GM12878 (cell line): ENCODE measurements at regions of chr5 and their contacts with region 1.

Region 1: DNA sequence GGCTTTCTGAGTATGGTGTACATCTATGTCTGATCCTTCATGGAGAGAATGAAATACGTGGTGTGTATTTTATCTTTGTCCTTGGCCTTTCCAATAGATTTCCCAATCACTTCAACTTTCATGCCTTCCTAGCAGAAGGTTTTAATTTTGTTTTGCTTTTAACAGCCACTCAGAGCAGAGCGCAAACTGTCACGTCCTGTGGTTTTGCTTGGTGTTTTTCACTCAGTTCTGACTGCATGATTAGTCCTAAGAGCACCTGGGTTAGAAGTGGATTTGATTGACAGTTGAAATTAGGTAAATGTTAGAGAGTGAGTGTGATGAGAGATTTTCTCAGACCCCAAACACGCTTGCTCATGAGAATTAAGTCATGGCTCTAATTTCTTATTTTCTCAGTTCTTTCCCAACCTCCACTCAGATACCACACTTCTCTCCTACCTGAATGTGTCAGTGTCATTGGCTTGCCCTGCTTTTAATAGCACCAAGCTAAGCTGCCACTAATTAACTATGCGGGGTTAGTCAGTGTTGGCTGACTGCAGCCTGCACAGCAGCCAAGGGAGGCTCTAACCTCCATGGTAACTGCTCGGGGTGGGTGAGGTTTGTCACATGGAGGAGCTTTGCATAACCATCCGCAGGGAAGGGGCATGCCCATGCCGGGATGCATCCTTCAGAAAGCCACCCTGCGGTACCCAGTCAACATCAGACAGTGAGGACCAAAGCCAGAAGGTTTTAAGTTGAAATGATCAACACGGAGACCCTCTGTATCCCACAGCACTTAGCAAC is 173.4 kb downstream of the NR3C1 start:
- DNase-seq: peak; percentile 99
- ATAC-seq: peak; percentile 89
- H3K4me3 ChIP-seq: peak overlapping the region; percentile 34; the same call in 1 of the 2 replicates
- H3K27ac ChIP-seq: peak overlapping the region; percentile 90
- H3K4me1 ChIP-seq: peaks cover 29% of the 10 kb centered on the region
- H3K27me3 ChIP-seq: no peaks in the 10 kb centered on the region
- CTCF ChIP-seq: no peak
- EP300 ChIP-seq: peak; percentile 74 to 88; a peak in 2 of 4 replicates
- POLR2A ChIP-seq: peak; percentile 56; the same call in 1 of the 2 replicates
- RAD21 ChIP-seq: peak; percentile 50; the same call in 1 of the 2 replicates

Region 2: DNA sequence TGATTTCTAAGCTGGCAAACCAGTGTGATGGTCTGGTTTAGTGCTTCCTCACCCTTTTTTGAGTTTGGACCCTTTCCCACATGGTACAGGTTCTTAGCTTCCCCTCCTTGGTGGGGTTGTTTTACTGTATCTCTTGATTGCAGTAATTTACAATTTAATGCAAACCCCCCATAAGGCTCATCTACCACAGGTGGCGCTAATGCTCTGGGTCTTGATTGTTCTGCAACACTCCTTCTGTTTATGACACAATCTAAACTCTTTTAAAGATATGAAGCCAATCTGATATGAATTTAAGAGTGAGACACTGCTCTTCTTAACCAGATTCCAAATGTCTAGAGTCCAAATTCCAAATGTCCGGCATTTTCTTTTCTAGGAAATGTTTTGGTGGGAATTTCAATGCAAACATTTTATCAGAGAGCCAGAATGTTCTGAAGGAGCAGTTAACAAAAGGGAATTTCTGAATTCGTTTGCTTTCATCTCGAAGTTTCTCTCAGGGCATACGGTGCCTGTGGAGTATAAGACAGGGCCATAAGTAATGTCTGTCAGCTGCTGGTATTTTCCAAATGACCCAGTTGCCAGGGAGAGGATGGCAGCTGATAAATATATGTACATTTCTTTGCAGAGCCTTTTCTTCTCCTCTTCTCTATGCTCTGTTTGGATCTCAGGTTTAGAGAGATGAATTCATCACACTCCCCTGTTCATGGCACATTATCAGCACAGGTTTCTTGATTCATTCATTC is 213.1 kb before region 1 on chr5:
- CTCF ChIA-PET with region 1: interaction called, 20 read pairs
- POLR2A ChIA-PET with region 1: interaction called, 7 read pairs
- RAD21 ChIA-PET with region 1: interaction called, 53 read pairs
- SMC1A ChIA-PET with region 1: interaction called, 21 read pairs
- in situ Hi-C with region 1: no loop called
- intact Hi-C with region 1: loop called (anchors 1 kb)
- DNase-seq: no peak
- ATAC-seq: peak; percentile 28
- H3K4me3 ChIP-seq: no peak overlapping the region
- H3K27ac ChIP-seq: no peak overlapping the region
- H3K4me1 ChIP-seq: peaks cover 32% of the 10 kb centered on the region
- H3K27me3 ChIP-seq: no peaks in the 10 kb centered on the region
- CTCF ChIP-seq: peak; percentile 68 to 75 (median 72)
- EP300 ChIP-seq: peak in 1 of 2 experiments; percentile 8; a peak in 1 of 4 replicates
- POLR2A ChIP-seq: no peak
- RAD21 ChIP-seq: peak; percentile 88

Region 3: DNA sequence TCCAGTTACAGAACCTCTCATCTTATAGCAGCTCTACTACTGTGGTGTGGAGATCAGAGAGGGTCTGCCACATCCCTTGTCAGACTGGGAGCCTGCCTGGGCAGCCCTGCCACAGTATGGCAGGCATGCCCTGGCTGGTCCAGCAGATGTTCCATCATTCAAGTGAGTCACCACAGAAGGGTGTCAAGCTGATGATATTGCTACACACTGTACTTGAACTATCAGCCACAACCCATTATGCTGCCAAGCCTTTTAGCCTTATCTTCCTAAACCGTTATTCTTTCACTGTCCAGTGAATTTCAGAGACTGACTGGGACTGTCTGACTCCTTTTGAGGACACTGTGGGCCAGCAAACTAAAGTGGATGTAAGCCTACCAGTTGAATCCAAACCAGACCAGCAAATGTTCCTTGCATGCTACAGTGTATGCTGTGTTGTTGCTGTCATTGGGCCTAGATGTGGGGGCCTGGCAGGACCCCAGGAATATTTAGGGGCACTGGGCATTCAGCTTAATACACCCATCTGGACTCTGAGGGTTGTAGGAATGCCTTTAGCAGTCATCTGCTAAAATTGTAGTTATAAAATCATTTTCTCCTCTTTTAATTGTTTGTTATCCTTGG is 29.2 kb before region 1 on chr5:
- CTCF ChIA-PET with region 1: interaction called, 75 read pairs
- POLR2A ChIA-PET with region 1: interaction called, 114 read pairs
- RAD21 ChIA-PET with region 1: interaction called, 482 read pairs
- SMC1A ChIA-PET with region 1: interaction called, 423 read pairs
- in situ Hi-C with region 1: no loop called
- intact Hi-C with region 1: loop called (anchors 1 kb)
- DNase-seq: no peak
- ATAC-seq: peak; percentile 69
- H3K4me3 ChIP-seq: no peak overlapping the region
- H3K27ac ChIP-seq: peak overlapping the region; percentile 14; the same call in 1 of the 2 replicates
- H3K4me1 ChIP-seq: peaks cover 17% of the 10 kb centered on the region
- H3K27me3 ChIP-seq: no peaks in the 10 kb centered on the region
- CTCF ChIP-seq: no peak
- EP300 ChIP-seq: no peak
- POLR2A ChIP-seq: no peak
- RAD21 ChIP-seq: no peak

Region 4: GRCh38 chr5:143271431-143271830 is 41.3 kb after region 1 on chr5:
- CTCF ChIA-PET with region 1: no interaction called
- POLR2A ChIA-PET with region 1: interaction called, 4 read pairs
- RAD21 ChIA-PET with region 1: interaction called, 12 read pairs
- SMC1A ChIA-PET with region 1: interaction called, 4 read pairs
- in situ Hi-C with region 1: no loop called
- intact Hi-C with region 1: loop called (anchors 5 kb)
- DNase-seq: no peak
- ATAC-seq: peak; percentile 69
- H3K4me3 ChIP-seq: no peak overlapping the region
- H3K27ac ChIP-seq: no peak overlapping the region
- H3K4me1 ChIP-seq: no peaks in the 10 kb centered on the region
- H3K27me3 ChIP-seq: no peaks in the 10 kb centered on the region
- CTCF ChIP-seq: no peak
- EP300 ChIP-seq: no peak
- POLR2A ChIP-seq: no peak
- RAD21 ChIP-seq: no peak

Region 5: GRCh38 chr5:143386725-143387124 is 156.6 kb after region 1 on chr5:
- CTCF ChIA-PET with region 1: no interaction called
- POLR2A ChIA-PET with region 1: no interaction called
- RAD21 ChIA-PET with region 1: interaction called, 5 read pairs
- SMC1A ChIA-PET with region 1: interaction called, 16 read pairs
- in situ Hi-C with region 1: no loop called
- intact Hi-C with region 1: no loop called
- DNase-seq: no peak
- ATAC-seq: no peak
- H3K4me3 ChIP-seq: no peak overlapping the region
- H3K27ac ChIP-seq: no peak overlapping the region
- H3K4me1 ChIP-seq: no peaks in the 10 kb centered on the region
- H3K27me3 ChIP-seq: no peaks in the 10 kb centered on the region
- CTCF ChIP-seq: no peak
- EP300 ChIP-seq: no peak
- POLR2A ChIP-seq: no peak
- RAD21 ChIP-seq: no peak

Region 6: DNA sequence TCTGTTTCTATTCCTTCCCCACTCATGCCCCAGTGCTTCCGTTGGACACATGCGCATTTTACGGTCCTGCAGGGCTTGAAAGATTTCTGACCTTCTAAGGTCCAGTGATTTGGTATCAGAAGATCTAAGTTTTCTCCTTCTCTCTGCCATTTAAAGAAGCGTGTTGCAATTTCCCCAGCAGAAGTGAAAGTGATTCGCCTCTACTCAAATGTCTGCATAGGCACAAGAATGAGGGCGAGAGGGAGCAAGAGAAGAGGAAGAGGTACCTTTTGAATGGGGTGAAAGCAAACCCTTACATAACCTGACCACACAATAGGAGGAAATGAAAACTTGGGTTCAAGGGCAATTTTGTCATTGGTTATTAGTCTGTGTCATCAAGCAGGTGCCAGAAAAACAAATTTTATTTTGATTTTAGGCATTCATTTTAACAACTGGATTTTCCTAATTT is 205.1 kb after region 1 on chr5:
- CTCF ChIA-PET with region 1: interaction called, 3 read pairs
- POLR2A ChIA-PET with region 1: interaction called, 3 read pairs
- RAD21 ChIA-PET with region 1: interaction called, 3 read pairs
- SMC1A ChIA-PET with region 1: interaction called, 11 read pairs
- in situ Hi-C with region 1: no loop called
- intact Hi-C with region 1: no loop called
- DNase-seq: peak; percentile 98
- ATAC-seq: peak; percentile 81
- H3K4me3 ChIP-seq: peak overlapping the region; percentile 49; the same call in 1 of the 2 replicates
- H3K27ac ChIP-seq: peak overlapping the region; percentile 89
- H3K4me1 ChIP-seq: peaks cover 16% of the 10 kb centered on the region
- H3K27me3 ChIP-seq: no peaks in the 10 kb centered on the region
- CTCF ChIP-seq: no peak
- EP300 ChIP-seq: peak; percentile 88 to 96
- POLR2A ChIP-seq: 0 out of 2 replicates have a peak, but pooled peaks have one; percentile 33
- RAD21 ChIP-seq: peak; percentile 42; the same call in 1 of the 2 replicates